ENCODE measurements at regions of chr9 and their contacts with region 1.

Region 1: GRCh38 chr9:37442556-37442955 is 20.1 kb downstream of the GRHPR start:
- DNase-seq: no peak
- H3K4me3 ChIP-seq: no peak overlapping the region
- H3K27me3 ChIP-seq: no peaks in the 10 kb centered on the region
- CTCF ChIP-seq: no peak

Region 2: DNA sequence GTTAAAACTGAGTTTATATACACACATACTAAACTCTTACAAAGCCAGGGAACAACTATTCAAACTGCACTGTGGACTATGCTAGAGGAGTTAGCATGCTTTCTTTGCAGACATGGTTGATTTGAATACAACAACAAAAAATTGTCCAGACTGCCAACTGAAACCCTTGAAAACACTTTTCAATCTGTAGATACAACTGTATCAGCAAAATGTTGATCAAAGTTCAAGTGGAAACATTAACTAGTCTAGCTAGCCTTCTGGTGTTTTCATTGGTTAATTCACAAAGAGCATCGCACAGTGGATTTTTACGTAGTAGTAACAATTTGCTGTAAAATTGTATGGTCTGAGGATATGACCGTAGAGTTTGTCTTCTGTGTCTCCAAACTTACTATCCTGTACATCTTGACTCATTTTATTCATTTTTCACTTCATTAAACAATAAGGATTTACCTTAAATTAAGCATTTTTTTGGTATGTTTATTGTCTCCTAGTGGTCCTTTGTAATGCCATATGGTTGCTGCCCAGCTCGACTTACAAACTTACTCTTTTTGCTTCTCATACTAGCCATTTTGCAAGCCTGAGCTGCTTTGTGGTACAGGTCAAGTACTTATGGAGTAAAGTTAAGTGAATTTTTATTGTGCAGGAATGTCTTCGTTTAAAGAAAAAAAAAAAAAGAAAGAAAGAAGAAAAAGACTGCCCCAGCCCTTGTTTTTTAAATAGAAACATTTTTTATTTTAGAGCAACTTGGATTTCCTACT is 198.8 kb before region 1 on chr9:
- CTCF ChIA-PET with region 1: no interaction called
- POLR2A ChIA-PET with region 1: no interaction called
- DNase-seq: no peak
- H3K4me3 ChIP-seq: no peak overlapping the region
- H3K27me3 ChIP-seq: no peaks in the 10 kb centered on the region
- CTCF ChIP-seq: no peak

Region 3: GRCh38 chr9:37430841-37431597 is 11.5 kb before region 1 on chr9:
- CTCF ChIA-PET with region 1: no interaction called
- POLR2A ChIA-PET with region 1: interaction called, 16 read pairs
- DNase-seq: no peak
- H3K4me3 ChIP-seq: no peak overlapping the region
- H3K27me3 ChIP-seq: no peaks in the 10 kb centered on the region
- CTCF ChIP-seq: 0 out of 2 replicates have a peak, but pooled peaks have one; percentile 4

Measured in BJ (cell line).